Endothelial cell of umbilical vein (primary cell): ENCODE measurements at regions of chr12 and their contacts with region 1.

Region 1: GRCh38 chr12:80846952-80847351 is 90.8 kb downstream of the LIN7A start:
- DNase-seq: no peak
- H3K4me3 ChIP-seq: no peak overlapping the region
- H3K27ac ChIP-seq: no peak overlapping the region
- H3K4me1 ChIP-seq: no peaks in the 10 kb centered on the region
- H3K27me3 ChIP-seq: no peaks in the 10 kb centered on the region
- CTCF ChIP-seq: no peak
- POLR2A ChIP-seq: no peak

Region 2: DNA sequence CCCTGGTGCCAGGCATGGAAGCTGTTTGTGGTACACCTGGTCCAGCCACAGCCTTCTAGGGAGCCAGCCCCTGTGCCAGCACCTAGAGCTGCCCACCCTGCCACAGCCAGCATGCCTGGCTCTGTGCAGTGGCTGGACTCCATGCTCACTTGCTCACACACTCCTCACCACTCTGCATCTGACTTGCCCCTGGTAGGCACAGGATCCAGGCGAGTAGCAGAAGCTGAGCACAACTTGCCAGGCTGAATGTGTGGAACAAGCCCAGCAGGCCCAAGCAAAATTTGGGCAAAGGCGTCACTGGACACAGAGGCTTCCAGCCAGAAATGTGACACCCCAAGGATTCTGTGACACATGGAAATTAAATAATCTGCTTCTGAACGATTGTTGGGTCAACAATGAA is 23.6 kb before region 1 on chr12:
- CTCF ChIA-PET with region 1: no interaction called
- POLR2A ChIA-PET with region 1: no interaction called
- dilution Hi-C with region 1: no loop called
- intact Hi-C with region 1: no loop called
- DNase-seq: no peak
- H3K4me3 ChIP-seq: no peak overlapping the region
- H3K27ac ChIP-seq: no peak overlapping the region
- H3K4me1 ChIP-seq: no peaks in the 10 kb centered on the region
- H3K27me3 ChIP-seq: no peaks in the 10 kb centered on the region
- CTCF ChIP-seq: no peak
- POLR2A ChIP-seq: no peak

Region 3: DNA sequence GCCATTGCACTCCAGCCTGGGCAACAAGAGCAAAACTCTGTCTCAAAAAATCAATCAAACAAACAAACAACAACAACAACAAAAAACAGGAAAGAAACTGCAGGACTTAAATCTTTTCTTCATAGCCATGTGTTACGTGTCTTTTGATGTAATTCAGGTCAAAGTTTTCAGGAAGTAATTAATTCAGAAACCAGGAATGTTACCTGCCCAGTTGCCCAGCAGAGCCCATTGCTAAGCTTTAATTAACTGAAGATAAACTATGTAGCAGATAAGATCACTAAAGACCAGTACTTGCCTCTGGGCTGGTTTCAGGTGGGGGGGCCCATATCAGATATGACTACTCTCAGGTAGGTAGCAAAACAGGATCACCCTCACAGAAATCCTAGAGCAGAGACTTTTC is 21.6 kb after region 1 on chr12:
- CTCF ChIA-PET with region 1: no interaction called
- POLR2A ChIA-PET with region 1: no interaction called
- dilution Hi-C with region 1: no loop called
- intact Hi-C with region 1: loop called (anchors 2 kb)
- DNase-seq: no peak
- H3K4me3 ChIP-seq: no peak overlapping the region
- H3K27ac ChIP-seq: no peak overlapping the region
- H3K4me1 ChIP-seq: no peaks in the 10 kb centered on the region
- H3K27me3 ChIP-seq: no peaks in the 10 kb centered on the region
- CTCF ChIP-seq: no peak
- POLR2A ChIP-seq: no peak

Region 4: GRCh38 chr12:80920006-80920405 is 73.1 kb after region 1 on chr12:
- CTCF ChIA-PET with region 1: no interaction called
- POLR2A ChIA-PET with region 1: no interaction called
- dilution Hi-C with region 1: no loop called
- intact Hi-C with region 1: no loop called
- DNase-seq: no peak
- H3K4me3 ChIP-seq: no peak overlapping the region
- H3K27ac ChIP-seq: no peak overlapping the region
- H3K4me1 ChIP-seq: no peaks in the 10 kb centered on the region
- H3K27me3 ChIP-seq: no peaks in the 10 kb centered on the region
- CTCF ChIP-seq: no peak
- POLR2A ChIP-seq: no peak

Region 5: DNA sequence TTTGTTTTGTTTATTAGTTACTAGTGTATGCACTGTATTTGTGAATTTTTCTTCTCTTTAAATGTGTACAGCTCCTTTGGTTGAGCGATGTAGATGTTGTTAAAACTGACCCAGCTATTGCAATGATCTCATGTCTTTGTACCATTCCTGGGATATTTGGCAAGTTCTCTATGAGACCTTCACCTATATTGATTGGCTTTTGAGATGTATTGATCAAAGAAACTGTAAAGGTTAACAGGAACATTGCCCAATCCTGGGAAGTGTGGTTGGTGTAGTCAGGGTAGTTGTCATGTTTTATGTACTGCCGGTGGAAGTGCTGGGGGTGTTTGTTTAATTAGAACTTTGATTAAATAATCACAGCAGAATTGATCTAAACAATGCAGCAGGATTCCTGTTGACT is 274.0 kb after region 1 on chr12:
- CTCF ChIA-PET with region 1: no interaction called
- POLR2A ChIA-PET with region 1: no interaction called
- dilution Hi-C with region 1: no loop called
- intact Hi-C with region 1: no loop called
- DNase-seq: no peak
- H3K4me3 ChIP-seq: no peak overlapping the region
- H3K27ac ChIP-seq: no peak overlapping the region
- H3K4me1 ChIP-seq: no peaks in the 10 kb centered on the region
- H3K27me3 ChIP-seq: no peaks in the 10 kb centered on the region
- CTCF ChIP-seq: no peak
- POLR2A ChIP-seq: no peak